ENCODE measurements at regions of chr4 and their contacts with region 1.

Region 1: GRCh38 chr4:53929955-53930798 is 134.2 kb downstream of the CHIC2 start:
- DNase-seq: peak; percentile 22 to 62 (median 41)
- H3K4me3 ChIP-seq: no peak overlapping the region
- H3K4me3 Mint-ChIP-seq: no peak overlapping the region
- H3K27ac ChIP-seq: no peak overlapping the region
- H3K27ac Mint-ChIP-seq: no peak overlapping the region
- H3K4me1 ChIP-seq: no peaks in the 10 kb centered on the region
- H3K4me1 Mint-ChIP-seq: no peaks in the 10 kb centered on the region
- H3K27me3 ChIP-seq: no peaks in the 10 kb centered on the region
- H3K27me3 Mint-ChIP-seq: peaks cover 0 to 4% of the 10 kb centered on the region in 2 donors

Region 2: GRCh38 chr4:53816561-53816960 is 113.6 kb before region 1 on chr4:
- CTCF ChIA-PET with region 1: no interaction called
- POLR2A ChIA-PET with region 1: no interaction called
- DNase-seq: no peak
- H3K4me3 ChIP-seq: no peak overlapping the region
- H3K4me3 Mint-ChIP-seq: no peak overlapping the region
- H3K27ac ChIP-seq: no peak overlapping the region
- H3K27ac Mint-ChIP-seq: no peak overlapping the region
- H3K4me1 ChIP-seq: no peaks in the 10 kb centered on the region
- H3K4me1 Mint-ChIP-seq: no peaks in the 10 kb centered on the region
- H3K27me3 ChIP-seq: no peaks in the 10 kb centered on the region
- H3K27me3 Mint-ChIP-seq: peaks cover 2 to 12% of the 10 kb centered on the region in 2 donors

Region 3: GRCh38 chr4:53942712-53943111 is 12.5 kb after region 1 on chr4:
- CTCF ChIA-PET with region 1: interaction called, 10 read pairs
- POLR2A ChIA-PET with region 1: no interaction called
- DNase-seq: no peak
- H3K4me3 ChIP-seq: no peak overlapping the region
- H3K4me3 Mint-ChIP-seq: no peak overlapping the region
- H3K27ac ChIP-seq: no peak overlapping the region
- H3K27ac Mint-ChIP-seq: no peak overlapping the region
- H3K4me1 ChIP-seq: no peaks in the 10 kb centered on the region
- H3K4me1 Mint-ChIP-seq: no peaks in the 10 kb centered on the region
- H3K27me3 ChIP-seq: no peaks in the 10 kb centered on the region
- H3K27me3 Mint-ChIP-seq: peaks cover 4 to 7% of the 10 kb centered on the region in 2 donors

Region 4: DNA sequence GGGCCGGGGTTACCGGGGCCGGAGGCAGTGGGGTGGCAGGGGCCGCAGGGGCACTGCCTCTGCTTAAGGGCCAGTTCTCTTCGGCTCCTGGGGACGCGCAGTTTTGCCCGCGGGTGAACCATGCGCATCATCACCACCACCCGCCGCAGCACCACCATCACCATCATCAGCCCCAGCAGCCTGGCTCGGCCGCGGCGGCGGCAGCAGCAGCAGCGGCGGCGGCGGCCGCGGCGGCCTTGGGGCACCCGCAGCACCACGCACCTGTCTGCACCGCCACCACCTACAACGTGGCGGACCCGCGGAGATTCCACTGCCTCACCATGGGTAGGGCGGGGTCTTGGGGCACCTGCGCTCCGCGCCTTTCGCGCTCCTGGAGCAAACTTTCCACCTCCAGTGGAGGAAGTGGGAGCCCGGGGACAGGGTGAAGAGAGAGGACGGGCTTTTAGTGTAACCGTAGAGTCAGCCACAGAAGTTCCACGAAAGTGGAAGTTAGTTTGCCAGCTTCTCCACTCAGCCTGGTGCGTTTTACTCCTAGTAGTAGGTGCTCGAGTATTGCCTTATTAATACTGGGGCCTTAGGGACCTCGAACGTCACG is 170.5 kb after region 1 on chr4:
- CTCF ChIA-PET with region 1: no interaction called
- POLR2A ChIA-PET with region 1: no interaction called
- DNase-seq: peak in 1 of 5 donors; percentile 27
- H3K4me3 ChIP-seq: peak overlapping the region; percentile 32
- H3K4me3 Mint-ChIP-seq: peak overlapping the region; percentile 53 to 78 (median 69)
- H3K27ac ChIP-seq: no peak overlapping the region
- H3K27ac Mint-ChIP-seq: no peak overlapping the region
- H3K4me1 ChIP-seq: peaks cover 26% of the 10 kb centered on the region
- H3K4me1 Mint-ChIP-seq: peaks cover 27 to 64% (median 48%) of the 10 kb centered on the region in 3 donors
- H3K27me3 ChIP-seq: peaks cover 85% of the 10 kb centered on the region
- H3K27me3 Mint-ChIP-seq: peaks cover 80 to 93% of the 10 kb centered on the region in 2 donors

Region 5: DNA sequence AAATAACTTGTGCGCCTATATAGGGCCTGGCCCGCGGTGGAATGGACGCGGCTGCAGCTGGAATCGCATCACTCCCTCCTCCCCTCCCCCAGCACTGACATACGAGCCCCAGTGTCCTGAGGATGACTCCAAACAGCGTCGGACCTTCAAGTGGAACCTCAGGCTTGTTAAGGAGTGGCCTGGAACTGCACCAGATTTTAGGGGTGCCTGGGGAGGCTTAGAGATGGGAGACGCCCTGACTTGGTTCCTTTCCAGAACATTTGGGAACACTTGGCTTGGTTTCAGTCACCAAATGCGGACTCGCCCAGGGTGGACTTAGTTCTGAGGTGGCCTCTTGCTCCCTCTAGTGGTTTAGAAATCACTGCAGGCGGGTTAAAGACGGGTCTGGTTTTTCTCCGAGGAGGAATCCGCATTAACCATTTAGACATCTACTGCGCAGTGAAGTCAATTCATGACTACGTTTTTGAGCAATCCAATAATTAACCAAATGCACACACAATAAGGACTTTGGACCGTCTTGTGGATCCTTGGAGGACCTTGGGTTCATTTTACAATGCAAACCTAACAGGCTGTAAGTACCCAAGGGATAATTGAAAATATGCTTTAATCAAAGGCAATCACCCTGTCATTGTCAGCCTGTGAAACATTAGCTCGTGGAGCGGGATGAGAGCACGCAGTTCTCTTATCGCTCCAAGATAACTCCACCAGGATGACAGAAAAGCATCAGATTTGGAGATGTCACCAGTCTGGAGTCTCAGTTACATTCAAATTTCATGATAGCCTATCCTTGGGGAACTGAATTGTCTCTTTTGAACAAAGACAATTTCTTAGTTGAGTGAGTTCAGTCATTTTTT is 287.7 kb after region 1 on chr4:
- CTCF ChIA-PET with region 1: interaction called, 95 read pairs
- POLR2A ChIA-PET with region 1: no interaction called
- DNase-seq: peak; percentile 22 to 62 (median 45)
- H3K4me3 ChIP-seq: no peak overlapping the region
- H3K4me3 Mint-ChIP-seq: no peak overlapping the region
- H3K27ac ChIP-seq: no peak overlapping the region
- H3K27ac Mint-ChIP-seq: no peak overlapping the region
- H3K4me1 ChIP-seq: peaks cover 4% of the 10 kb centered on the region
- H3K4me1 Mint-ChIP-seq: peaks cover 5 to 7% (median 6%) of the 10 kb centered on the region in 3 donors
- H3K27me3 ChIP-seq: peaks cover 15% of the 10 kb centered on the region
- H3K27me3 Mint-ChIP-seq: peaks cover 27 to 51% of the 10 kb centered on the region in 2 donors

Measured in CD8-positive, alpha-beta memory T cell (primary cell).